HepG2 (cell line): ENCODE measurements at regions of chr10 and their contacts with region 1.

Region 1: GRCh38 chr10:122181055-122181732 is 89.9 kb upstream of the BTBD16 start:
- DNase-seq: no peak
- ATAC-seq: no peak
- H3K4me3 ChIP-seq: no peak overlapping the region
- H3K27ac ChIP-seq: no peak overlapping the region
- H3K4me1 ChIP-seq: peaks cover 53% of the 10 kb centered on the region
- H3K27me3 ChIP-seq: no peaks in the 10 kb centered on the region
- CTCF ChIP-seq: no peak
- EP300 ChIP-seq: no peak
- POLR2A ChIP-seq: no peak
- RAD21 ChIP-seq: no peak

Region 2: GRCh38 chr10:122051251-122051996 is 129.8 kb before region 1 on chr10:
- CTCF ChIA-PET with region 1: no interaction called
- POLR2A ChIA-PET with region 1: no interaction called
- in situ Hi-C with region 1: no loop called
- intact Hi-C with region 1: loop called (anchors 1 kb)
- DNase-seq: peak; percentile 70
- ATAC-seq: peak; percentile 34
- H3K4me3 ChIP-seq: no peak overlapping the region
- H3K27ac ChIP-seq: no peak overlapping the region
- H3K4me1 ChIP-seq: peaks cover 69% of the 10 kb centered on the region
- H3K27me3 ChIP-seq: no peaks in the 10 kb centered on the region
- CTCF ChIP-seq: peak; percentile 53
- EP300 ChIP-seq: no peak
- POLR2A ChIP-seq: no peak
- RAD21 ChIP-seq: no peak

Region 3: GRCh38 chr10:122142641-122143237 is 38.5 kb before region 1 on chr10:
- CTCF ChIA-PET with region 1: no interaction called
- POLR2A ChIA-PET with region 1: interaction called, 3 read pairs
- in situ Hi-C with region 1: no loop called
- intact Hi-C with region 1: loop called (anchors 1 kb)
- DNase-seq: no peak
- ATAC-seq: peak; percentile 64
- H3K4me3 ChIP-seq: no peak overlapping the region
- H3K27ac ChIP-seq: no peak overlapping the region
- H3K4me1 ChIP-seq: peaks cover 31% of the 10 kb centered on the region
- H3K27me3 ChIP-seq: no peaks in the 10 kb centered on the region
- CTCF ChIP-seq: peak; percentile 94
- EP300 ChIP-seq: no peak
- POLR2A ChIP-seq: no peak
- RAD21 ChIP-seq: peak; percentile 91

Region 4: GRCh38 chr10:122206471-122207065 is 25.4 kb after region 1 on chr10:
- CTCF ChIA-PET with region 1: no interaction called
- POLR2A ChIA-PET with region 1: no interaction called
- in situ Hi-C with region 1: no loop called
- intact Hi-C with region 1: no loop called
- DNase-seq: no peak
- ATAC-seq: no peak
- H3K4me3 ChIP-seq: no peak overlapping the region
- H3K27ac ChIP-seq: no peak overlapping the region
- H3K4me1 ChIP-seq: peaks cover 31% of the 10 kb centered on the region
- H3K27me3 ChIP-seq: no peaks in the 10 kb centered on the region
- CTCF ChIP-seq: peak; percentile 21; the same call in 1 of the 2 replicates
- EP300 ChIP-seq: no peak
- POLR2A ChIP-seq: no peak
- RAD21 ChIP-seq: no peak